ENCODE measurements at regions of chr5 and their contacts with region 1.

Region 1: DNA sequence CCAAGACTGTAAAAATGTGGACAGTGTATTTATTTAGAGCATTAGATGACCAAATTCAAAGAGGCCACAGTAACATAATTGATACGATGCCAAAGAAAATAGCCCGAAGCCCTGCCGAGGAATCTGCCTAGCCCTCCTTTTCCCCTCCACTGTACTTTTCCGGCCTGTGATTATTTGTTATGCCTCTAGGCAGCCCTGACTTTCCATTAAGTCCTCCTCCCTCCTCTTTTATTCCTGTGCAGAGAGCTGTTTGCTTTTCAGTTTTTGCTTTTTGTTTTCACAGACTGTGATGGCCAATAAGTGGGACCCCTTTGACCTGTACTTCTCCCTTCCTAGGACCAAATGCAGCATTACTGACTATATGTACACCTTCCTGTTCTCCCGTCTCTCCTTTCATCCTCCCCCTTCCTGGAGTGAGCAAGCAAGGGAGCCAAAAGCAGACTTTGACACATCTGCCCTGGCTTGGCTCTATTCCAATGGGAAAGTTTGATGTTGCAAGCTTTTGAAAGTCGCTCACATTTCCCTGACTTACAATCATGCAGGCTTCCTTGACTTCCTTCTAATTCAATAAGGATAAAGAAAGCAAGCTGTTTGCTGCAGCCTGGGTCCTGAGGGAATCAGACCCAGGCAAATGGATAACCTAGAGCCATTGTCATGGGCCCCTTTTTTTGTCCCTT is 76.1 kb downstream of the NREP start:
- DNase-seq: peak in 1 of 2 donors; percentile 74
- H3K4me3 ChIP-seq: peak overlapping the region in 1 of 2 donors; percentile 48
- H3K27ac ChIP-seq: no peak overlapping the region
- H3K4me1 ChIP-seq: peaks cover 6% of the 10 kb centered on the region in 2 donors
- H3K27me3 ChIP-seq: no peaks in the 10 kb centered on the region
- CTCF ChIP-seq: no peak

Region 2: GRCh38 chr5:111735583-111736270 is 54.9 kb after region 1 on chr5:
- intact Hi-C with region 1: loop called (anchors 5 kb)
- DNase-seq: no peak
- H3K4me3 ChIP-seq: no peak overlapping the region
- H3K27ac ChIP-seq: no peak overlapping the region
- H3K4me1 ChIP-seq: peaks cover 0 to 21% of the 10 kb centered on the region in 2 donors
- H3K27me3 ChIP-seq: no peaks in the 10 kb centered on the region
- CTCF ChIP-seq: no peak

Measured in ascending aorta (tissue), 2 donors.